IMR-90 (cell line): ENCODE measurements at regions of chr15 and their contacts with region 1.

Region 1: DNA sequence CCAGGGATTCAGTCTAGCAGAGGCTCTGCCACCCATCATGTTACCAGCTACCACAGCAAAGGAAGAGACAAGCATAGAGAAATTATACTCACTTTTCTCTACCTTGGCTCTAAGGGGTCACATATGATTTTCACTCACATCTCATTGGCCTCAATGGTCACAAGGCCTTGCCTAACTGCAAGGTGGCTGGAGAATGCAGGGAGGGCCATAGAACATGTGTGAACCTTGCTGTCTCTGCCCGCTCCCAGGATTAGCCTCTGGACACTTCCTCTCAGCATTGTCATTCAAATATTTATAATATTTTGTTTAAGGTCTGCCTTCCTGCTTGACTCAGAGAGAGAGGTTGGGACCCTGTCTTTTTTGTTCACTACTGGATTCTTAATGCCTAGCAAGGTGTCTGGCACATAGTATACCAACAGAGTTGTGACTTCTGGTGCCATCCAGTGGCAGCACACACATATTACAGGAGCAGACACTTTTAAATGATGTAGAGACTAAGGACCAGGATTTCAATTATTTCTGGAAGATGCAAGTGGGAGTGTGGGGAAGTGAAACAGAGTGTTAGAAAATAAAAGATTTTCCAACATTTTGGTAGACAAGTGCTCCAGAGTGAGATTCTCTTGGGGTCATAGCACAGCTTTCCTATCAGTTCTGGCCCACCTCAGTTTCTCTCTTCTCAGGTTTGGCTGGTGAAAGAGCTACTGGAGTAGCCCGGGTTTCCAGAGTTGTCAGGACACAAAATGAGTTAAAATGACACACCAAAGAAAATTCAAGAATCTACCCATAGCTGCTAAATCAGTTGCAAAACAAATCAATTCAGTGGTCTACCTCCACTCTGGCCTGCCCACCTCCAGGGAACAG is 119.0 kb upstream of the RASGRP1 start:
- DNase-seq: peak; percentile 53
- ATAC-seq: peak; percentile 94
- H3K4me3 ChIP-seq: no peak overlapping the region
- H3K27ac ChIP-seq: no peak overlapping the region
- H3K4me1 ChIP-seq: no peaks in the 10 kb centered on the region
- H3K27me3 ChIP-seq: peaks cover 20% of the 10 kb centered on the region
- CTCF ChIP-seq: peak; percentile 86
- POLR2A ChIP-seq: no peak
- RAD21 ChIP-seq: peak; percentile 85

Region 2: DNA sequence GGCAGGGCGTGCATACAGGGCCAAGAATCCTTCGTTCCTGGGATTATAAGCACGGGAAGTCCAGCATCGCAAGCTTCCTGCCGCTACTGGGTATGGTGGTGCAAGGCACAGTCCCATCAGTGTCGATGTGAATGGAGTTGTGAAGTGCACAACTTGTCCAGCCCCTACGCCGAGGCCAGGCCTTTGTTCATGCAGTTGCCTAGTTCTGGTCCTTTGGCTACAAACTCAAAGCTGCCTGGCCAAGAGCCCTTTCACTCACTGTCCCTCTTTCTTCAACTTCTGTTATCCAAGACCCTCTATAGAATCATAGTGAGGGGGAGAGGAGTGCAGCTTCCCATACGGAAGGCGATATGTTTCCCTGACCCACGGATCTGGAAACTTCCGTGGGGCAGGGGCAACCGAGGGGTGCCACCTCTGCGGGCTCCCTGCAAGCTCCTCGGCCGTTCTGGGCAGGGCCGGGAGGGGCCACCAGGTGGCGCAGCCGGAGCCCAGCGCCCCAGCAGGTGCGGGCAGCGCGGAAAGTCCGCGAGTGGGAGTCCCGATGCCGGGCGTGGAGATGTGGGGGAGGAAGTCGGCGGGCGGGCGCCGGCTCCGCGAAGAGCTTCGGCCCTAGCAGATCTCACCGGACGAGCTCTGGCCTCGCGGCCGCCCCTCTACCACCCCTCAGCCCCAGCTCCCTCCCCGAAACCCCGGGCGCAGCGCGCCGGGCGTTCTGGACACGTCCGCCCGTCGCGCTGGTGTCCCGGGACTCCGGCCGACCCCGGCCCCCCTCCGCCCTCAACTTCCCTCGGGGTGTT is 119.7 kb before region 1 on chr15:
- CTCF ChIA-PET with region 1: interaction called, 6 read pairs
- POLR2A ChIA-PET with region 1: no interaction called
- dilution Hi-C with region 1: no loop called
- in situ Hi-C with region 1: no loop called
- intact Hi-C with region 1: loop called (anchors 2 kb)
- DNase-seq: peak; percentile 35
- ATAC-seq: peak; percentile 89
- H3K4me3 ChIP-seq: peak overlapping the region; percentile 52
- H3K27ac ChIP-seq: no peak overlapping the region
- H3K4me1 ChIP-seq: peaks cover 5% of the 10 kb centered on the region
- H3K27me3 ChIP-seq: peaks cover 21% of the 10 kb centered on the region
- CTCF ChIP-seq: peak; percentile 68
- POLR2A ChIP-seq: no peak
- RAD21 ChIP-seq: peak; percentile 53

Region 3: DNA sequence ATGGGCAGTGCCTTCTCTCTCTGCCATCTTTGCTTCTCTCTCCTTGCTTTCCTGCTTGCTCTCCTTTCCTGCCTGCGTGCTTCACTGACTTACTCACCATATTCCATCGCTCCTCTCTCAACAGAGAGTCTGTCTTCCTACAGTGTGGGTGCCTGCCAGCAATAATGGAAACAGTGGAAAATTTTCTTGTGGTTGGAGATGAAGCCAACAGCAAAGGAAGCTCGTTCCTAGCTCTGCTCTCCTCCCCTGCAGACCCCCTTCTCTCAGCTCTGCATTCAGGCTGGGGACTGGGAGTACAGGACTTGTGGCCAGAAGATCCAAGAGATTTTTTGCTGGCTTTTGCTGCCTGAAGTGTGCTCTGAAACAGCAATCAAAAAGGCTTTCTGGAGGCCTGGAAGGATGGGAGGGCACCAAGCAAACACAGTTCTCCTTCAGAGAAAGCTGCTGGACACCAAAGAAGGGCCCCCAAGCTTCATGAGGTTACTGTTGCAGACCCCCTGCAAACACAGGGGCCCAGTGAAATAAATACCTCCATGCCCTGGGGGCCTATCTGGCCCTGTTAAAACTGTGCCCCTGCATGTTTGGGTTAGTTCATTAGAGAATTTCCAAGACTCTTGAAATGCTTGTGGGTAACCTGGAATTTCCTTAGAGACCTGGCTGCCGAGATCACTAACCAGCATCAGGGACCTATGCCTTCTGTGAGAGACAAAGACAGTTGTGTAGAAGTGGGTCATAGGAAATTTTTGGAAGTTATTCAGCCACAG is 30.9 kb after region 1 on chr15:
- CTCF ChIA-PET with region 1: no interaction called
- POLR2A ChIA-PET with region 1: no interaction called
- dilution Hi-C with region 1: no loop called
- in situ Hi-C with region 1: no loop called
- intact Hi-C with region 1: no loop called
- DNase-seq: peak; percentile 96
- ATAC-seq: peak; percentile 92
- H3K4me3 ChIP-seq: no peak overlapping the region
- H3K27ac ChIP-seq: peak overlapping the region; percentile 88
- H3K4me1 ChIP-seq: peaks cover 12% of the 10 kb centered on the region
- H3K27me3 ChIP-seq: no peaks in the 10 kb centered on the region
- CTCF ChIP-seq: no peak
- POLR2A ChIP-seq: no peak
- RAD21 ChIP-seq: peak; percentile 28; the same call in 1 of the 2 replicates

Region 4: GRCh38 chr15:39358441-39359041 is 674.9 kb after region 1 on chr15:
- CTCF ChIA-PET with region 1: no interaction called
- POLR2A ChIA-PET with region 1: no interaction called
- dilution Hi-C with region 1: no loop called
- in situ Hi-C with region 1: no loop called
- intact Hi-C with region 1: no loop called
- DNase-seq: peak; percentile 84
- ATAC-seq: peak; percentile 74
- H3K4me3 ChIP-seq: no peak overlapping the region
- H3K27ac ChIP-seq: peak overlapping the region; percentile 96
- H3K4me1 ChIP-seq: peaks cover 18% of the 10 kb centered on the region
- H3K27me3 ChIP-seq: no peaks in the 10 kb centered on the region
- CTCF ChIP-seq: no peak
- POLR2A ChIP-seq: no peak
- RAD21 ChIP-seq: no peak